ENCODE measurements at regions of chr15 and their contacts with region 1.

Region 1: DNA sequence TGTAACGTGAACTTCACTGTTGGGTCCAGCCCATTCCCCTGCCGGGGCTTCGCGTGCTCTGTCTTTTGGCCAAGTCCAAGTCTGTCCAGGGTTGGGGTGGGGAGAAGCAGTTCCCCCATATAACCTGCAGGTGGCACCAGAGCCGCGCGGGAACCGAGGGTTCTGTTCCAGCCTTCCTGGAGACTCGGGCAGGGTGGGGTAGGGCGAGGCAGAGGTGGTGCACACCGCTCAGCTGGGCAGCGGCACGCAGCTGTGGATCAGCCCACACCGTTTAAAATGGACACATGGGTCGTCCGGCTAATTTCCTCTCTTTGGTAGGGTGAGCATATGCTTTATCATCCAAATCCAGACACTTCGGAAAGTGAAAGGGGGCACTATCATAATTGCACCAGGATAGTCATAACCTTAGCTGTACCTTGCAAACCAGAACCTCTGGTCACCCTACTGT is 118.1 kb downstream of the TBC1D2B start:
- DNase-seq: peak; percentile 84
- CTCF ChIP-seq: peak; percentile 97

Region 2: GRCh38 chr15:78241007-78241406 is 281.6 kb after region 1 on chr15:
- in situ Hi-C with region 1: loop called (anchors 25 kb)
- DNase-seq: peak; percentile 91
- CTCF ChIP-seq: peak; percentile 84

Measured in GM13976 (cell line).